ENCODE measurements at regions of chr1 and their contacts with region 1.

Region 1: DNA sequence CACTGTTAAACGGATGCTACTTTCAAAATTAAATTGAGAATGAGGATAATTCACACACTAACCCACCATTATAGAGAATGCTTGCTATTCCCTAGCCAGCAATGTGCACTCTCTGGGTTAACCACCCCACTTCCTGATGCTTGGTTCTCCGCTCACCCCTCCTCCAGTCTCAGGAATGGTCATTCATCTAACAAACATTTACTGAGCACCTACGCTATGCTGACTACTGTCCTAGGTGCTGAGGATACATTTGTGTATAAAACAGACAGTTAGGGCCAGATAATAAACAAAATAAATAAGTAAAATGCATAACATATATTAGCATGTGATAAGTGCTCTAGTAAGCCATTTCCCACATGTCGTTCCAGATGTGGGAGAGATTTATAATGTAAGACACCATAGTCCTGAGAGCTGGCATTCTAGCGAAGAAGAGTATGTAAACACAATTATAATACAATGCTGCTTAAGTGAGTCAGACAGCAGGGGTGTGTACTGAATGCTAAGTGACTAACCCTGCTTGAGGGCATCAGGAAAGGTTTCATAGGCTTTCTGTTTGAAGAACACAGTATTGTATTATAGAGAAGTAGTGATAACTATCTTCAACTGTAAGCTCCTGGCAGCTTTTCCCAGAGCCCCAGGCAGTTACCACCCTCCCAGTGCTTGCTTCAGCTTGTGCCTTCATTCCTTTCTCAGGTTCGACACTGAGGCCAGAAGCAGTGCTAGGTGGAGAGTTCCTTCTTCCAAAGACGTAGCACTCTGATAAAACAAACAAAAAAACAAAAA is 126.6 kb upstream of the CACHD1 start:
- DNase-seq: peak; percentile 91 to 99
- H3K4me3 ChIP-seq: peak overlapping the region; percentile 15; the same call in 1 of the 2 replicates
- H3K27ac ChIP-seq: peak overlapping the region; percentile 91
- H3K4me1 ChIP-seq: peaks cover 44% of the 10 kb centered on the region
- H3K27me3 ChIP-seq: no peaks in the 10 kb centered on the region
- CTCF ChIP-seq: no peak

Region 2: DNA sequence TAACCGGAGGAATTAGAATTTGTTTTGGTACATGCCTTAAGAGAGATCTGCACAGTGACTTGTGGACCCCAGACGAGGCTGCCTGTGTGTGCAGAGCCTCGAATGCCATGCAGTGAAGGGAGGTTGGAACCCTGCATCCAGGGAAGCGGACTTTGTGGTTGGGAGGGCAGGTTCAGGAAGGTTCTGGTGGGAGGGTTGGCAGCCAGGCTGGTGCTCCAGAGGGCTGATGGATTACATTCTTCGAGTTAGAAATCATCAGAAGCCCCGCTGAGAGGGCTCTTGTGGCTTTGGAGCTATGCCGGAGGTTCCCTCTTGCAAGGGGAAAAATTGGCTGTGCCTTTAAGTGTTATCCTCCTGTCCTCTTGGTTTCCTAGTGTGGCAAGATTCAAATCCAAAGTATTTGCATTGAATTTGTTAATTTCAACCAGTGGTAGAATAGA is 548.3 kb before region 1 on chr1:
- CTCF ChIA-PET with region 1: no interaction called
- POLR2A ChIA-PET with region 1: no interaction called
- intact Hi-C with region 1: no loop called
- DNase-seq: peak in 1 of 2 experiments; percentile 40
- H3K4me3 ChIP-seq: no peak overlapping the region
- H3K27ac ChIP-seq: no peak overlapping the region
- H3K4me1 ChIP-seq: peaks cover 6% of the 10 kb centered on the region; the same call in 1 of the 2 replicates
- H3K27me3 ChIP-seq: no peaks in the 10 kb centered on the region
- CTCF ChIP-seq: no peak

Region 3: DNA sequence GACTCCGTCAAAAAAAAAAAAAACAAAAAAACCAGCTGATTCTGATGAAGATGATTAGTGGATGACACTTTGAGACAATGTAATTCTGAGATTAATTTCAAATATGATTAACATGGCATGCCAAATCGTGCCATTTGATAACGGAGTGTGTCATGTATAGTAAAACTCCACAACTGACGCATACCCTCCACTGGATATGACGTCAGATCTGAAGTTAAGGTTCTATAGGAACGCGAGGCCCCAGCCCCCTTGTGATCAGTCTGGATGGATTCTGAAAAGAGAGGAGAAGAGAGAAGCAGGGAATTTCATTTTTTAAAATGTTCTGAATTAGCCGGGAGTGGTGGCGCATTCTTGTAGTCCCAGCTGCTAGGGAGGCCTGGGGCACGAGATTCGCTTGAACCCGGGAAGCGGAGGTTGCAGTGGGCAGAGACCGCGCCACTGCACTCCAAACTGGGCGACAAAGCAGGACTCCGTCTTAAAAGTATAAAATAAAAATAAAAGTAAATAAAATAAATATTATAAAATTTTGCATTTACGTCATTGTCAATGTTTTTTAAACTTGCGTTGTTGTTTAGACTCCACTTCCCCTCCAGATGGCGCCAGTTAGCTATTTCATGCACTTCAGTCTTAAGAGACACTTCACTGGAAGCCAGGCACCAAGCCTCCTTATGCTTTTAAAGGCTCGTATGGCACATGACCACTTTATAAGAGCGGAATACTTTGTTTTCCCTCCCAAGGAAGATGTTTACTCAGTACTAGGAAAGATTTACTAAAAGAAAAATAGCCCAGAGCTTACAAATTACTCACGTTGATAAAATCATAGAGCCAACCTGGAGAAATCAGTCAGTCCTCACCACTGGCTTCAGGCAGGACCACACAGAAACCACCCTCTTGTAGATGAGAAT is 74.4 kb before region 1 on chr1:
- CTCF ChIA-PET with region 1: no interaction called
- POLR2A ChIA-PET with region 1: no interaction called
- intact Hi-C with region 1: loop called (anchors 5 kb)
- DNase-seq: peak; percentile 63 to 68
- H3K4me3 ChIP-seq: no peak overlapping the region
- H3K27ac ChIP-seq: no peak overlapping the region
- H3K4me1 ChIP-seq: 0 out of 2 replicates have a peak, but pooled peaks cover 6% of the 10 kb centered on the region
- H3K27me3 ChIP-seq: no peaks in the 10 kb centered on the region
- CTCF ChIP-seq: peak; percentile 94

Region 4: GRCh38 chr1:64320470-64320869 is 22.8 kb before region 1 on chr1:
- CTCF ChIA-PET with region 1: no interaction called
- POLR2A ChIA-PET with region 1: interaction called, 6 read pairs
- intact Hi-C with region 1: loop called (anchors 1 kb)
- DNase-seq: peak in 1 of 2 experiments; percentile 74
- H3K4me3 ChIP-seq: no peak overlapping the region
- H3K27ac ChIP-seq: peak overlapping the region; percentile 41; the same call in 1 of the 2 replicates
- H3K4me1 ChIP-seq: peaks cover 26% of the 10 kb centered on the region
- H3K27me3 ChIP-seq: no peaks in the 10 kb centered on the region
- CTCF ChIP-seq: no peak

Region 5: DNA sequence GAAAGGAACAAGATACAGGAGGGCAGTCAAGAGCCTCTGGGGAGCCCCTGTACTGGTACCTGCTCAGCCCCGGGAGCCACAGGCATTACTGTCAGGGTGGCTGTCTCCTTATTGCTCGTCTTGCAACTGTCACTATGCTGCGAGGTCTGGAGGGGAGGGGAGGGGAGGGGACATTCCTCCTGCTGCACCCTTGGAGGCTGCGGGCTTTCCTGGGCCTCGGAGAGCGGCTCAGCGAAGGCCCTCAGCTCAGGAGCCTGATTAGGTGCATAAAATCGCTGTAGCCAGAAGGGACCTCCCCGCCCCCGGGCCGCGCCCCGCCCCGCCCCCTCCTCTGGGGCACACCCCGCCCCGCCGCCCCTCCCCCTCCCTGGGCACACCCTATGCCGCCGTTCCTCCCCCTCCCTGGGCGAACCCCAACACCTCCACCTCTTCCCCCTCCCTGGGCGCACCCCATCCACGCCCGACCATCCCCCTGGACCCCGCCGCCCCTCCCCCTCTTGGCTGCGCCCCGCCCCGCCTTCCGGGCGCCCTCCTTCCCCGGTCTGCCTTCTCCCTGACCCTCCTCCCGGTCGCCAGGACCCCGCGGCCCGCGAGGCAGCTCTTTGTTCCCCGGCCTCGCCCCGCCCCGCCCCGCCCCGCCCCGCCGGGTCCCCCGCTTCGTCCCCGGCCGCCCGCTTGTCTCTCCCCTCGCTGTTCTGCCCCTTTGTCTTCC is 162.1 kb after region 1 on chr1:
- CTCF ChIA-PET with region 1: no interaction called
- POLR2A ChIA-PET with region 1: no interaction called
- intact Hi-C with region 1: loop called (anchors 10 kb)
- DNase-seq: peak in 1 of 2 experiments; percentile 58
- H3K4me3 ChIP-seq: peak overlapping the region; percentile 58
- H3K27ac ChIP-seq: no peak overlapping the region
- H3K4me1 ChIP-seq: peaks cover 14% of the 10 kb centered on the region
- H3K27me3 ChIP-seq: no peaks in the 10 kb centered on the region
- CTCF ChIP-seq: no peak

Region 6: GRCh38 chr1:64686828-64687724 is 343.8 kb after region 1 on chr1:
- CTCF ChIA-PET with region 1: no interaction called
- POLR2A ChIA-PET with region 1: no interaction called
- intact Hi-C with region 1: loop called (anchors 5 kb)
- DNase-seq: peak; percentile 31 to 43
- H3K4me3 ChIP-seq: no peak overlapping the region
- H3K27ac ChIP-seq: no peak overlapping the region
- H3K4me1 ChIP-seq: no peaks in the 10 kb centered on the region; the same call in 1 of the 2 replicates
- H3K27me3 ChIP-seq: no peaks in the 10 kb centered on the region
- CTCF ChIP-seq: peak; percentile 88